B cell (primary cell): ENCODE measurements at regions of chr5 and their contacts with region 1.

Region 1: GRCh38 chr5:154072414-154073171 is 33.8 kb downstream of the MFAP3 start:
- DNase-seq: peak; percentile 84
- ATAC-seq: peak; percentile 98
- H3K4me3 ChIP-seq: no peak overlapping the region
- H3K4me3 Mint-ChIP-seq: no peak overlapping the region
- H3K27ac ChIP-seq: no peak overlapping the region
- H3K27ac Mint-ChIP-seq: no peak overlapping the region
- H3K4me1 ChIP-seq: peaks cover 2 to 3% of the 10 kb centered on the region in 2 donors
- H3K4me1 Mint-ChIP-seq: peaks cover 3% of the 10 kb centered on the region
- H3K27me3 ChIP-seq: no peaks in the 10 kb centered on the region
- H3K27me3 Mint-ChIP-seq: peaks cover 44% of the 10 kb centered on the region
- CTCF ChIP-seq: peak; percentile 98

Region 2: GRCh38 chr5:153974131-153974812 is 98.3 kb before region 1 on chr5:
- CTCF ChIA-PET with region 1: interaction called, 14 read pairs
- POLR2A ChIA-PET with region 1: no interaction called
- intact Hi-C with region 1: no loop called
- DNase-seq: peak; percentile 49
- ATAC-seq: no peak
- H3K4me3 ChIP-seq: no peak overlapping the region
- H3K4me3 Mint-ChIP-seq: no peak overlapping the region
- H3K27ac ChIP-seq: no peak overlapping the region
- H3K27ac Mint-ChIP-seq: no peak overlapping the region
- H3K4me1 ChIP-seq: peaks cover 0 to 3% of the 10 kb centered on the region in 2 donors
- H3K4me1 Mint-ChIP-seq: no peaks in the 10 kb centered on the region
- H3K27me3 ChIP-seq: peaks cover 0 to 8% (median 3%) of the 10 kb centered on the region in 4 experiments
- H3K27me3 Mint-ChIP-seq: peaks cover 32% of the 10 kb centered on the region
- CTCF ChIP-seq: peak; percentile 80

Region 3: DNA sequence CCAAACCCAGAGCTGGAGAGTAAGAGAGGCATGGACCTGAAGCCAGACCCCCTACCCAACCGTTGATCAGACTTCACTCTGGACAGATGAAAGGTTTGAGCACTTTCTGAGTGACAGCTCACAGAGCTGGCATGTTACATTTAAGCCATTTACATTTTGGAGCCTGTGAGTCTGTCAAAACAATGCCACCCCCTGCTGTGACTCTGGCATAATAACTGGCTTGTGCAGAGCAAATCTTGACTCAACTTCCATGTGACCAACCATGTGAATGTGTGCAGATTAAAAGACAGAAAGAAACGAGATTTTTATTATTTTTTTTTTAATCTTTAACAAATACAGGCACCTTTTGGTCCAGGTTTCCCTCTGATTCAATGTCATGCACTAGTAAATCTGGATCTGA is 14.7 kb after region 1 on chr5:
- CTCF ChIA-PET with region 1: interaction called, 20 read pairs
- POLR2A ChIA-PET with region 1: no interaction called
- intact Hi-C with region 1: no loop called
- DNase-seq: no peak
- ATAC-seq: no peak
- H3K4me3 ChIP-seq: no peak overlapping the region
- H3K4me3 Mint-ChIP-seq: no peak overlapping the region
- H3K27ac ChIP-seq: no peak overlapping the region
- H3K27ac Mint-ChIP-seq: no peak overlapping the region
- H3K4me1 ChIP-seq: no peaks in the 10 kb centered on the region
- H3K4me1 Mint-ChIP-seq: no peaks in the 10 kb centered on the region
- H3K27me3 ChIP-seq: peaks cover 0 to 11% (median 8%) of the 10 kb centered on the region in 4 experiments
- H3K27me3 Mint-ChIP-seq: peaks cover 28% of the 10 kb centered on the region
- CTCF ChIP-seq: no peak

Region 4: GRCh38 chr5:154179846-154180710 is 107.5 kb after region 1 on chr5:
- CTCF ChIA-PET with region 1: interaction called, 24 read pairs
- POLR2A ChIA-PET with region 1: no interaction called
- intact Hi-C with region 1: loop called (anchors 1 kb)
- DNase-seq: peak; percentile 64
- ATAC-seq: peak; percentile 84
- H3K4me3 ChIP-seq: no peak overlapping the region
- H3K4me3 Mint-ChIP-seq: no peak overlapping the region
- H3K27ac ChIP-seq: no peak overlapping the region
- H3K27ac Mint-ChIP-seq: no peak overlapping the region
- H3K4me1 ChIP-seq: peaks cover 0 to 7% of the 10 kb centered on the region in 2 donors
- H3K4me1 Mint-ChIP-seq: peaks cover 18% of the 10 kb centered on the region
- H3K27me3 ChIP-seq: no peaks in the 10 kb centered on the region
- H3K27me3 Mint-ChIP-seq: peaks cover 14% of the 10 kb centered on the region
- CTCF ChIP-seq: peak; percentile 92

Region 5: DNA sequence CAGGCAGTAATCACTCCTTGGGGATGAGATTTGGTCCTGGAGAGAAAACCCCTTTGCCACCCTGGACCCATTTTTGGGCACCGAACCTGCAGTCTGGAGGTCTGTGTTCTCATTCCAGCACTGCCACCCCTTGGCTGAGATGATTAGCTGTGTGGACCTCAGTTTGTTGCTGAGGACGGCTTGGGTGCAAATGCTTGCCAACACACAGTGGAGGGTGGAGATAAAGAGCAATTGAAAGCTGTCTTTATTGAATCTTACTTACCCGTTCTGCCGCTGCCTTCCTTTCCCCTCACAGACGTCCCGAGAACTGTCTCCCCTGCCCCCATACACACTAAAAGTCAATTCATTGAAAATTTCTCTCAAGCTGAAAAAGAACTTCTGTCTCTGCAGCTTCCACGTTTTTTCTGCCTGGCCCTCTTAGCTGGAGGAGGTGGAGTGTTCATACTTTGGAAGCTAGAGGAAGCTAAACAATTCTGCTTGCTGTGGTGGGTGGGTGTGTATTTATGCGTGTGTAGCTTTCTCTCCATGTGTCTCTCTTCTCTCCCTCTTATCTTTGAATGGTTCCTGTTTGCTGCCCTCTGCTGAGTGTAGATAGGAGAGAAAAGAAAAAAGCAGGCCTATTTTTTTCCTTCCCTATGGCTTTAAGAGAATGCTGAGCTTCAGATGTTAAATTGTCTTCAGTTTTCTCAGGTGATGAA is 124.5 kb after region 1 on chr5:
- CTCF ChIA-PET with region 1: interaction called, 21 read pairs
- POLR2A ChIA-PET with region 1: no interaction called
- intact Hi-C with region 1: no loop called
- DNase-seq: peak; percentile 17
- ATAC-seq: no peak
- H3K4me3 ChIP-seq: no peak overlapping the region
- H3K4me3 Mint-ChIP-seq: peak overlapping the region; percentile 12
- H3K27ac ChIP-seq: no peak overlapping the region
- H3K27ac Mint-ChIP-seq: no peak overlapping the region
- H3K4me1 ChIP-seq: peaks cover 17 to 37% of the 10 kb centered on the region in 2 donors
- H3K4me1 Mint-ChIP-seq: peaks cover 66% of the 10 kb centered on the region
- H3K27me3 ChIP-seq: no peaks in the 10 kb centered on the region
- H3K27me3 Mint-ChIP-seq: no peaks in the 10 kb centered on the region
- CTCF ChIP-seq: no peak

Region 6: DNA sequence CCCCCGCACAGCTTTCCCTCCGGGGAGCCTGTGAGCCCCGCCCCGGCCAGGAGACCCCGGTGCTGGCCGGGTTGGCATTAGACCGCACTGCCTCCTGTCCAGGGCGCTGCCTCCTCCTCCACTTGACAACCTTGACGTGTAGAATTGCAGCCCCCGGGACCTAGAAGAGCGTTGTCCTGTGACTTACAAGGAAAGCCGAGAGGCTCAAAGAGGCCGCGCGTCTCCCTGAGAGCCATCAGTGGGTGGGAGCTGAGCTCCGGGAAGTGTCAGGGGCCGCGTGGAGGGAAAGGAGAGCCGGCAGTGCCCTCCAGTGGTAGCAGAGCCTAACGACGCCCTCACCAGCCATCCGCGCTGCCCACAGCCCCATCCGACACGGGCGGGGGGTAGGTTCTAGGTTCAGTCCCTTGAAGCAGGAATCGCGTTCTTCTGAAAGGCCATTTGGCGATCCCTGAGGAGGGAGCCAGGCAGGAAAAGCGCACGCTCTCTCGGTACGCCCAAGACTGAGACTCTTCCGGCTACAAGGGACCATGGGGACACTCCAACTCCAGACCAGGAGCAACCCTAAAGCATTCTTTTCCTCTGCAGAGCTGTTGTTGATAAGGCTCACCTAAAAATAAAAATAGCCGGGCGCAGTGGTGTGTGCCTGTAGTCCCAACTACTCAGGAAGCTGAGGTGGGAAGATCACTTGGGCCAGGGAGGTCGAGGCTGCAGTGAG is 332.6 kb after region 1 on chr5:
- CTCF ChIA-PET with region 1: interaction called, 295 read pairs
- POLR2A ChIA-PET with region 1: interaction called, 3 read pairs
- intact Hi-C with region 1: no loop called
- DNase-seq: peak; percentile 82
- ATAC-seq: peak; percentile 98
- H3K4me3 ChIP-seq: peak overlapping the region in 4 of 5 experiments; percentile 15 to 48 (median 40)
- H3K4me3 Mint-ChIP-seq: peak overlapping the region; percentile 64
- H3K27ac ChIP-seq: no peak overlapping the region
- H3K27ac Mint-ChIP-seq: no peak overlapping the region
- H3K4me1 ChIP-seq: peaks cover 3 to 11% of the 10 kb centered on the region in 2 donors
- H3K4me1 Mint-ChIP-seq: peaks cover 13% of the 10 kb centered on the region
- H3K27me3 ChIP-seq: no peaks in the 10 kb centered on the region
- H3K27me3 Mint-ChIP-seq: no peaks in the 10 kb centered on the region
- CTCF ChIP-seq: peak; percentile 87

Region 7: GRCh38 chr5:154610321-154611154 is 537.9 kb after region 1 on chr5:
- CTCF ChIA-PET with region 1: interaction called, 5 read pairs
- POLR2A ChIA-PET with region 1: no interaction called
- intact Hi-C with region 1: loop called (anchors 1 kb)
- DNase-seq: peak; percentile 70
- ATAC-seq: peak; percentile 68
- H3K4me3 ChIP-seq: peak overlapping the region in 2 of 5 experiments; percentile 36 to 45
- H3K4me3 Mint-ChIP-seq: peak overlapping the region; percentile 72
- H3K27ac ChIP-seq: no peak overlapping the region
- H3K27ac Mint-ChIP-seq: no peak overlapping the region
- H3K4me1 ChIP-seq: peaks cover 12 to 14% of the 10 kb centered on the region in 2 donors
- H3K4me1 Mint-ChIP-seq: peaks cover 13% of the 10 kb centered on the region
- H3K27me3 ChIP-seq: peaks cover 0 to 56% (median 19%) of the 10 kb centered on the region in 4 experiments
- H3K27me3 Mint-ChIP-seq: peaks cover 42% of the 10 kb centered on the region
- CTCF ChIP-seq: peak; percentile 69

Region 8: DNA sequence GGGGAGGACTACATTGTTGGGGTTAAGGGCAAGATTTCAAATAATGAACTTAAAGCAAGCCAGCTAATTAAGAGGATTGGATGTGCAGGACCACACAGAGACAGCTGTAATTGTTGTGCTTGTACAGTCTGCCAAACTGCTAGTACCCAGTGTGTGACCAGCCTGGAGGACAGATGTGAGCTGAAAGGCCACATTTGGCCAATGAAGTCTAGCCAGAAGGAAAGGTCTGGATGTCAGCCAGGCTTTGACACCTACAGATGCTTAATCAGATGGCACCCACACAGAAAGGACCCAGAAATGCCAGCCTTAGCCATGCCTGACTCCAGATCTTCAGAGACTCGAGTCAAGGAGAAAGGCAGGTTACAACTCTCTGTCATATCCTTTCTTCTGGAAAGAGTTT is 1432.0 kb after region 1 on chr5:
- CTCF ChIA-PET with region 1: no interaction called
- POLR2A ChIA-PET with region 1: no interaction called
- intact Hi-C with region 1: no loop called
- DNase-seq: no peak
- ATAC-seq: no peak
- H3K4me3 ChIP-seq: no peak overlapping the region
- H3K4me3 Mint-ChIP-seq: no peak overlapping the region
- H3K27ac ChIP-seq: no peak overlapping the region
- H3K27ac Mint-ChIP-seq: no peak overlapping the region
- H3K4me1 ChIP-seq: no peaks in the 10 kb centered on the region
- H3K4me1 Mint-ChIP-seq: no peaks in the 10 kb centered on the region
- H3K27me3 ChIP-seq: no peaks in the 10 kb centered on the region
- H3K27me3 Mint-ChIP-seq: no peaks in the 10 kb centered on the region
- CTCF ChIP-seq: no peak